Tibial artery (tissue), 4 donors: ENCODE measurements at regions of chrX and their contacts with region 1.

Region 1: DNA sequence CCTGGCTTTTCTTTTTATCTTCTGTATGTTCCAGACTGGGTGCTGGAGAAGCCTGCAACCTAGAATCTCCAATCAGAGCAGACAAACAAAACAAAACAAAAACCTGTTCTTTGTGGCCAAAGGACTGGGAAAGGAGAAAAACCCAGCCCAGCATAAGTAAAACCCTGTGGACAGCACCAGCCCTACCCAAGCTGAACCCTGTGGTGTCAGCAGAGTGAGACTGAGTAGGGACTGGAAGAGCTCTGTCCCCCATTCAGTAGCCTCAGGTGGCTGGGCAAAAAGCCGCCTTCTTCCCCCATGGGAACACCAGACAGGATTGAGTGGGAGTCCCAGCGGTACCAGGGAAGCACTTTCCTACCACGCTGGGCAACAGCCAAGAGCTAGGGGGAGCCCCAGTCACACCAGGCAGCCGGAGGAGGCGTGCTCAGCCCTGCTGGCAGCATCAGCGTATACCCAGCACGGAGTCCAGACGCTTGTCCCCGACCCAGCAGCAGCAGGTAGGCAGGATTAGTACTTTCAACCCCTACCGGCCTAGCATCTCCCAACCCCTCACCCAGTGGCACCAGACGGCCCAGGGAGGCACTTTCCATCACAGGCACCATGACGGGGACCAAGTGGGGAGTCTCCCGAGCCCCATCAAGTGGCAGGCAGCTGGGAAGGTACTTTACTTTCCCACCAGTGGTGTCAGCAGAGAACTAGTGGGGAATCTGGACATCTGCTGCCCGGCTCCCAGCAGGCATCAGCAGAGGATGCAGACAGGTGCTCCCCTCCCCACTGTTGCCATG is 8.6 kb upstream of the JADE3 start:
- DNase-seq: peak; percentile 64 to 84
- H3K4me3 ChIP-seq: peak overlapping the region; percentile 42 to 53
- H3K27ac ChIP-seq: no peak overlapping the region
- H3K4me1 ChIP-seq: peaks cover 0 to 3% (median 0%) of the 10 kb centered on the region in 4 donors
- H3K27me3 ChIP-seq: no peaks in the 10 kb centered on the region
- CTCF ChIP-seq: peak; percentile 50 to 58

Region 2: GRCh38 chrX:46796574-46797191 is 107.0 kb before region 1 on chrX:
- intact Hi-C with region 1: no loop called
- DNase-seq: peak; percentile 75 to 76
- H3K4me3 ChIP-seq: no peak overlapping the region
- H3K27ac ChIP-seq: no peak overlapping the region
- H3K4me1 ChIP-seq: peaks cover 0 to 5% (median 0%) of the 10 kb centered on the region in 4 donors
- H3K27me3 ChIP-seq: no peaks in the 10 kb centered on the region
- CTCF ChIP-seq: peak; percentile 59 to 65

Region 3: GRCh38 chrX:46836701-46837557 is 66.7 kb before region 1 on chrX and contains the start of gene RP2:
- intact Hi-C with region 1: no loop called
- DNase-seq: peak; percentile 93 to 95
- H3K4me3 ChIP-seq: peak within 1 kb of the TSS; percentile 78 to 83
- H3K27ac ChIP-seq: peak within 1 kb of the TSS; percentile 84 to 94
- H3K4me1 ChIP-seq: peaks cover 0 to 19% (median 3%) of the 10 kb centered on the region in 4 donors
- H3K27me3 ChIP-seq: no peaks in the 10 kb centered on the region
- CTCF ChIP-seq: peak; percentile 17 to 31

Region 4: GRCh38 chrX:46882266-46882665 is 21.4 kb before region 1 on chrX:
- intact Hi-C with region 1: no loop called
- DNase-seq: no peak
- H3K4me3 ChIP-seq: no peak overlapping the region
- H3K27ac ChIP-seq: no peak overlapping the region
- H3K4me1 ChIP-seq: peaks cover 0 to 1% (median 0%) of the 10 kb centered on the region in 4 donors
- H3K27me3 ChIP-seq: no peaks in the 10 kb centered on the region
- CTCF ChIP-seq: no peak

Region 5: DNA sequence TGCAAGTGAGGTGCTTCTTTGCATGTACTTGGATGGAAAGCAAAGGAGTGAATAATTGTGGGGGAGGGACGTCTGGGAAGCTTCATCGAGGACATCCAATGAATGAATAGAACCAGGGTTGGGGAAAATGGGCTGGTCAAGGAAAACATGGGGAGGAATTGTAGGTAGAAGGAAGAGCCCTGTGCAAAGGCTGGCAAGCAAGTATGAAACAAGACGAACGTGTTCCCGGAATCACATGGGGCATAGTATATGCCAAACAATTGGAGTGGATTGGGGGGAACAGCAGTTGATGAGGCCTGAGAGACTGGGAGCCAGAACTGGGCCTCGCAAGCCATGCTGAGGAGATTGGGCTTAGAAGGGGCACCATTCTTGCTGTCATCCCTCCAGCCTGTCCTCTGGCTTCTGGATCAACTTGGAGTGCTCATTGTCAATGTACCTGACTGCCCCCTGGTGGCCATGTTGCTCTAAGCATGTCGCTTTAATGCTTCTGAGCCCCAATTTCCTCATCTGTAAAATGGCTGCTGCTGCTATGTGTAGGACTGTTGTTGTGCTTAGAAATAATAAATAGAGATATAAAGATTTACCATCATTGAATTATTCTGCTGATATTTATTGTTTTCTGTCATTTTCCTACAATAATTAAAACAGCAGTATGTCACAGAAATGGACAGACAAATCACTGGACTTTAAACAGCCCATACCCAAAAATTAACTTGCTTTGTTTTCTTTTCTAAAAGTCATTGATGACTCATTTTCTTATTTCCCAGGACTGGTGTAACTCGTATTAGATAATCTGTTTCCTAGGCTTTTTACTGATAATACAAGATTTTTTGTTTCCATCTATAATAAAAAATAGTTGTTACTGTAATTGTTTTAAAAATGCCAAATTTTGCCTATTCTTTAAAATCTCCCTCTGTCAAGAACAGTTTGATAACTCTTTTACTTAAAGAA is 75.0 kb after region 1 on chrX:
- intact Hi-C with region 1: loop called (anchors 10 kb)
- DNase-seq: peak; percentile 57 to 70
- H3K4me3 ChIP-seq: no peak overlapping the region
- H3K27ac ChIP-seq: peak overlapping the region in 1 of 2 donors; percentile 51
- H3K4me1 ChIP-seq: peaks cover 0 to 6% (median 0%) of the 10 kb centered on the region in 4 donors
- H3K27me3 ChIP-seq: no peaks in the 10 kb centered on the region
- CTCF ChIP-seq: peak; percentile 37 to 44